Keratinocyte (primary cell): ENCODE measurements at regions of chr2 and their contacts with region 1.

Region 1: DNA sequence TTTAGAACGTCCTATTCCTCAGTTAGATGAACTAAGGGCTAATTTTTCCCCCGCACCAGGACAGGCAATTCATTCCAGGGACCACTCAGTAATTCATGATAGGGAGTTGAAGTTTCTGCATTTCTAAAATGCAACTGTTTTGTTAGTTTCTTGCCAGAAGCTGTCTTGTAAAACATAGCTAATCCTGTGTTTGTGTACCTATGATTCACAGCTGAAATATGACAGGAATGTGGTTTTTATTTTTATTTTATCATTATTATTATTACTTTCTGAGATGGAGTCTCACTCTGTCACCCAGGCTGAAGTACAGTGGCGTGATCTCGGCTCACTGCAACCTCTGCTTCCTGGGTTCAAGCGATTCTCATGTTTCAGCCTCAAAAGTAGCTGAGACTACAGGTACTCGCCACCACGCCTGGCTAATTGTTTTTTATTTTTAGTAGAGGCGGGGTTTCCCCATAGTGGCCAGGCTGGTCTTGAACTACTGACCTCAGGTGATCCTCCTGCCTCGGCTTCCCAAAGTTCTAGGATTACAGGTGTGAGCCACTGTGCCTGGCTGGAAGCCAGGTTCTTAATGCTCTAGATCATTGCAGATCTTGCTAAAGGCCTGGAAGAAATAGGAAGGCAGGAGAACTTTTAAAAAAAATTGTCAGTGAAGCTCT is 154.8 kb upstream of the FHL2 start:
- DNase-seq: no peak
- H3K4me3 ChIP-seq: no peak overlapping the region
- H3K27ac ChIP-seq: no peak overlapping the region
- H3K4me1 ChIP-seq: peaks cover 15% of the 10 kb centered on the region
- H3K27me3 ChIP-seq: peaks cover 40% of the 10 kb centered on the region
- CTCF ChIP-seq: no peak

Region 2: DNA sequence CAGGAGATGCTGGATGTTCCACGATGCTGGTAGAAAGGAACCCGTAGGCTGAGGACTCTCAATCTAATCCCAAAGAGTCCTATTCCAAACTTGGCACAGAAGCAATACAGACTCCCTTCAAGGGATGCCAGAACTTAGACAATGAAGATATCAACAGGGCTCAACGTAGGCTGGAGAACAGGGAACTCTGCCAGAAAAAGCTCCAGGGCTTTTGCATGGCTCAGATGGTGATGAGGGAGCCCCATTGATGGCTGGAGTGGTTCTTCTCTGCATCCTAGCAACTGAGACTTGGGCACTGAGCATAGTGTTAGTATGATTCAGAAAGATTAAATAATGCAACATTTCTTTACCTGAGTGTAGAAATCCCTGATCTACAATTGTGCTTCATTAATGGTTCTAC is 73.9 kb after region 1 on chr2:
- dilution Hi-C with region 1: no loop called
- DNase-seq: no peak
- H3K4me3 ChIP-seq: no peak overlapping the region
- H3K27ac ChIP-seq: no peak overlapping the region
- H3K4me1 ChIP-seq: no peaks in the 10 kb centered on the region
- H3K27me3 ChIP-seq: peaks cover 11% of the 10 kb centered on the region
- CTCF ChIP-seq: no peak

Region 3: GRCh38 chr2:105769504-105769903 is 215.8 kb after region 1 on chr2:
- dilution Hi-C with region 1: loop called (anchors 25 kb)
- DNase-seq: no peak
- H3K4me3 ChIP-seq: no peak overlapping the region
- H3K27ac ChIP-seq: peak overlapping the region; percentile 33
- H3K4me1 ChIP-seq: peaks cover 14% of the 10 kb centered on the region
- H3K27me3 ChIP-seq: no peaks in the 10 kb centered on the region
- CTCF ChIP-seq: peak in 1 of 3 experiments; percentile 22